ENCODE measurements at regions of chr20 and their contacts with region 1.

Region 1: DNA sequence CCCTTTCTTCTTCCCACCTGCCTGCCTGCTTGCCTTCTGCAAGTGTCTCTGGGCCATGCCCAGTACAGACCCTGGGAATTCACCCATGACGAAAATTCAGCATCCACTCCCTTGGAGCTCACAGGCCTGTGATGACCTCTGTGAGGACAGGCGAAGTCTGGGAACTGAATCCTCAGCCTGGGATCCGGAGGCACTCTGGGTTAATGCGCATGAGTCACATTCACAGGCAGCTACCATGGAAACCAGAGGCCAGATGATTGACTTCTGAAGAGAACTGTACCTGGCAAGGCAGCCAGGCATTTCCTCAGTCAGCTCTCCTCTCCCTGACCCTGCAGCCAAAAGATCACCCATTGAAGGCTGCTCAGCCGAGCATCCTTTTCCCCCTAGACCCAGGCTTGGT is 41.0 kb downstream of the SLC9A8 start:
- DNase-seq: peak; percentile 39 to 89
- H3K4me3 ChIP-seq: no peak overlapping the region
- H3K27ac ChIP-seq: peak overlapping the region; percentile 76 to 82
- H3K4me1 ChIP-seq: peaks cover 15 to 48% of the 10 kb centered on the region in 2 donors
- H3K27me3 ChIP-seq: no peaks in the 10 kb centered on the region
- CTCF ChIP-seq: no peak

Region 2: DNA sequence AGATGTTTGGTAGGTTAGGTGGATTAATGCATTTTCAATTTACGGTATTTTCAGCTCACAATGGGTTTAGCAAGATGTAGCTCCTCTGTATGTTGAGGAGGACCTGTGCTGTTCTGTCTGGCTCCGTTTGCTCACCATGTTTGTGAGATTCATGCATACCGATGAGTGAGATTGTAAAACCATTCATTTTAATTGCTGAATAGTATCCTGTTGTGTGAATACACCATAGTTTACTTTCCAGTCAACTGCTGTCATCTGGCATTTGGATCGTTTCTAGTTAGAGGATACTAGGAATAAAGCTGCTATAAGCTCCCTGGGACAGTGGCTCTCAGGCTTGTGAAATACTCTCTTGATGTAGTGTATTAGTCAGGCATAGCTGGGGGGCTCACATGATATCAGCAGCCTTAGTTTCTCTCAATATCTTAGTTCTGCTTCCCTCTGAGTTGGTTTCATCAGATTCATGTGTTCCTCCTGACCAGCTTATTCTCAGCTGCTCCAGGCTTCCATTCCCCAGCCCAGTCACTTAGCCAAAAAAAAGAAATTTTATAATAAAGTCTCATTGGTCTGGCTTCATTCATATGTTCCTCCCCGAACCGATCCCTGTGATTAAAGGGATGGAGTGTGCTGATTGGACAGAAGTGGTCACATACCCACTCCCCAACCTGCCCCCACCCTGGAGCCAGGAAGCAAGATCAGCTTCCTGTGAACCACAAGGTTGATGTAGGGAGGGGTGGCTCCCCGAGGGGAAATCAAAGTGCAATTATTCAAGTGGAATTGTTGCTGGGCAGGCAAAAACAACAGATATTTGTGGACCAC is 129.0 kb before region 1 on chr20:
- intact Hi-C with region 1: no loop called
- DNase-seq: no peak
- H3K4me3 ChIP-seq: no peak overlapping the region
- H3K27ac ChIP-seq: peak overlapping the region in 1 of 2 donors; percentile 9
- H3K4me1 ChIP-seq: peaks cover 0 to 10% of the 10 kb centered on the region in 2 donors
- H3K27me3 ChIP-seq: no peaks in the 10 kb centered on the region
- CTCF ChIP-seq: no peak

Region 3: DNA sequence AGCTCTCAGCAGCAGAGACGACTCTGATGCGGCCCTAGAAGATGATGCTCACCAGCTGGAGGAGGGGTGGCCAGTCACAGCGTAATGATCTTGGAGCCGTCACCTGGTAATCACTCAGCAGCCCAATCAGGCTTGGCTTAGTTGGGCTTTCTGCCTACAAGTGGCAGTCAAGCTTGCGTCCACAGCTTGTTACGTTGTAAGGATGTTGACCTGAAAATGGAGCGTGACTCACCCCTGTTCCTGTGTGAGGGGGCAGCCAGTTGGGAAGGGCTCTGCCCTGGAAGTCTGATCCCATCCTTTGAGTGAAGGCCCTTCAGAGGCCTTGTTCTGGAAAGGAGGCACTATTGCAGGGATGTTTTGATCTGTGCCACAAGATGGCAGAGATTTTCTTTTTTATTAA is 11.9 kb after region 1 on chr20:
- intact Hi-C with region 1: loop called (anchors 2 kb)
- DNase-seq: peak in 1 of 2 donors; percentile 66
- H3K4me3 ChIP-seq: no peak overlapping the region
- H3K27ac ChIP-seq: peak overlapping the region; percentile 51 to 76
- H3K4me1 ChIP-seq: peaks cover 12 to 35% of the 10 kb centered on the region in 2 donors
- H3K27me3 ChIP-seq: no peaks in the 10 kb centered on the region
- CTCF ChIP-seq: no peak

Region 4: DNA sequence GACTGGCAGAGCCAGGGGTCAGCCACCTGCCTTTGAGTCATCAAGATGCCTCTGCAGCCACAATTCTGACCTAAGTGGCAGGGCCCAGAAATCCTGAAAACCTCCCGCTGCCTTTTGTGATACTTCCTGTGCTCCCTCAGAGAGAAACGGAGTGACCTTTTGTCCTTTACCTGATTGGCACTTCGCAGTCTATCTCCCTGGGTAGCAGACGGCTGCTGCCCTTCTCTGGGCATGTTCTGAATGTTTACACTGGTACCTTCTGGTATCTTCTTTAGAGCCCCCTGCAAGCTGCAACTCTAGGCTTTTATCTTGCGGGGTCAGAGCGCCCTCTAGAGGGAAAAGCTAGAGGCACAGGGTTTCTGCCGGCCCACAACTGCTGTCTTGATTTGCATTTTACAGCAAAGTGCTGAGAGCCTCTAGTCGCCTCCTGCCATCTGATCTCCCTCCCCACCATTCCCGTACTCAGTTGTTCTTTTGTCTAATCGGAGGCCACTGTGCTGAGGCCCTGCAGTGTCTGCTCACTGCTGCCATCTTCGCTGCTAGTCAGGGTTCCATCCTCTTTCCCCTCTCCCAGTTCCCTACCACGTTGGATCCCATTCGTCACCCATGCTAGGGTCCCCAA is 34.8 kb after region 1 on chr20:
- intact Hi-C with region 1: loop called (anchors 5 kb)
- DNase-seq: no peak
- H3K4me3 ChIP-seq: no peak overlapping the region
- H3K27ac ChIP-seq: peak overlapping the region; percentile 79 to 84
- H3K4me1 ChIP-seq: peaks cover 16 to 33% of the 10 kb centered on the region in 2 donors
- H3K27me3 ChIP-seq: no peaks in the 10 kb centered on the region
- CTCF ChIP-seq: peak; percentile 68 to 84 (median 81)

Measured in ascending aorta (tissue), 2 donors.